BJ (cell line): ENCODE measurements at regions of chr2 and their contacts with region 1.

Region 1: DNA sequence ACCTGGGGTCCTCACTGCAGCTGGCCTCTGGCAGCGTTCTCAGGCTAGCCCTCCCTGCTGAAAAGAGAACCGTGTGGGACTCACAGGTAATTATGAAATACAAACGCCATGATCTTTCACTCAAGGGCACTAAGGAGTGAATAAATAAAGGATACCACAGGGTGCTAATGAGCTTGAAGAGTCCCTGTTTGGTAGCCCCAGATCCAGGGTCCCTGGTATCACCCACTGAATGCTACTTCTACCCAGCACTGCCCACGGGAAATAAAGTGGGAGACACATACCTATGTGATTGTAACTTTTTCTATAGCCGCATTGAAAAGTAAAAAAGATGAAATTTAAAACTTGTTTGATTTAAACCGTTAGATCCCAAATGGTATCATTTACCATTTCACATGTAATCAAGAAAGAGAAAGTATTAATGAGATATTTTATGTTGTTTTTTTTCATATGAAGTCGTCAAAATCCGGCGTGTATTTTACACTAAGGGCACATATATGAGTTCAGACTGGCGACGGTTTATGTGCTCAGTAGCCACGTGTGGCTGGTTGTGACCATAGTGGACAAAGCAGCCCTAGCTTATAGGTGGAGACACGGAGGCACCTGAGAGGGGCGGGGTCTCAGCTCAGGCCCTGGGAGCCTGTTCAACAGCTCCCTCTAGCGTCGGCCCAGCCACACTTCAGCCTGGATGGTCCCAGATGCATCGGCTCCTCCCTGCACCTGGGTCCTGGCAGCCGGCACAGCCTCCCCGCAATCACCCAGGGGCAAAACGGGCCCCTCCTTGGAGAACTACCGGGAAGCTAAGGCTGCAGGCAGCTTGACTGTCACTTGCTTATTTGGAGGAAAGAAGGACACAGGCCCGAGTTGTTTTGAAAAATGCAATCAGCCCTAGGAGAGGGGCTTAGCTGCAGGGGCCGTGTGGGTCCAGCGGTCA is 39.2 kb downstream of the ODC1 start:
- DNase-seq: no peak
- H3K4me3 ChIP-seq: no peak overlapping the region
- H3K27me3 ChIP-seq: no peaks in the 10 kb centered on the region
- CTCF ChIP-seq: peak; percentile 98

Region 2: GRCh38 chr2:10072656-10073480 is 336.0 kb before region 1 on chr2:
- CTCF ChIA-PET with region 1: interaction called, 30 read pairs
- POLR2A ChIA-PET with region 1: no interaction called
- DNase-seq: no peak
- H3K4me3 ChIP-seq: no peak overlapping the region
- H3K27me3 ChIP-seq: 0 out of 2 replicates have a peak, but pooled peaks cover 2% of the 10 kb centered on the region
- CTCF ChIP-seq: peak; percentile 93

Region 3: DNA sequence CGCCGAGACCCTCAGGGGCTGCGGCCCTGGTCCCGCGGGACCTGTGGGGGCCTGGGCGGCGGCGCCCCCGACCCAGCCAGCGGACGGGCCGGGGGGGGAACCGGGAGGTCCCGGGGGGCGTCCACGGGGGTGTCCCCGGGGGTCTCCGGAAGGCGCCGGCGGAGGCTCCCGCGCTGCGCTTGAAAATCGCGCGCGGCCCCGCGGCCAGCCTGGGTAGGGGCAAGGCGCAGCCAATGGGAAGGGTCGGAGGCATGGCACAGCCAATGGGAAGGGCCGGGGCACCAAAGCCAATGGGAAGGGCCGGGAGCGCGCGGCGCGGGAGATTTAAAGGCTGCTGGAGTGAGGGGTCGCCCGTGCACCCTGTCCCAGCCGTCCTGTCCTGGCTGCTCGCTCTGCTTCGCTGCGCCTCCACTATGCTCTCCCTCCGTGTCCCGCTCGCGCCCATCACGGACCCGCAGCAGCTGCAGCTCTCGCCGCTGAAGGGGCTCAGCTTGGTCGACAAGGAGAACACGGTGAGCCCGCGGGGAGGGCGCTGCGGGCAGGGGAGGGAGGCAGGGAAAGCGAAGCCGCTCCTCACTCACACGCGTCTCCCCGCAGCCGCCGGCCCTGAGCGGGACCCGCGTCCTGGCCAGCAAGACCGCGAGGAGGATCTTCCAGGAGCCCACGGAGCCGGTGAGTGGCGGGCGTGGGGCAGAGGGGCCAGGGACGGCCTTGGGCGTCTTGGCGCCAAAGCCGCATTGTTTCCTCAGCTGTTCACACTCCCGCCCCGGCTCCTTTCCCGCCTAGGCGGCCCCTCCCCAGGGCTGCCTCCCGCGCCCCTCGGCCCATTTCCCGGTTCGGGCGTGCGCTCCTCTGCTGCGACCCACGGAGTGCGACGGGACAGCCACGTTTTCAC is 286.3 kb before region 1 on chr2 and contains the start of gene RRM2:
- CTCF ChIA-PET with region 1: interaction called, 136 read pairs
- POLR2A ChIA-PET with region 1: no interaction called
- DNase-seq: no peak
- H3K4me3 ChIP-seq: peak within 1 kb of the TSS; percentile 80
- H3K27me3 ChIP-seq: no peaks in the 10 kb centered on the region
- CTCF ChIP-seq: no peak
- polyA plus RNA-seq, gene RRM2: 23.5 and 31.8 TPM in 2 replicates

Region 4: DNA sequence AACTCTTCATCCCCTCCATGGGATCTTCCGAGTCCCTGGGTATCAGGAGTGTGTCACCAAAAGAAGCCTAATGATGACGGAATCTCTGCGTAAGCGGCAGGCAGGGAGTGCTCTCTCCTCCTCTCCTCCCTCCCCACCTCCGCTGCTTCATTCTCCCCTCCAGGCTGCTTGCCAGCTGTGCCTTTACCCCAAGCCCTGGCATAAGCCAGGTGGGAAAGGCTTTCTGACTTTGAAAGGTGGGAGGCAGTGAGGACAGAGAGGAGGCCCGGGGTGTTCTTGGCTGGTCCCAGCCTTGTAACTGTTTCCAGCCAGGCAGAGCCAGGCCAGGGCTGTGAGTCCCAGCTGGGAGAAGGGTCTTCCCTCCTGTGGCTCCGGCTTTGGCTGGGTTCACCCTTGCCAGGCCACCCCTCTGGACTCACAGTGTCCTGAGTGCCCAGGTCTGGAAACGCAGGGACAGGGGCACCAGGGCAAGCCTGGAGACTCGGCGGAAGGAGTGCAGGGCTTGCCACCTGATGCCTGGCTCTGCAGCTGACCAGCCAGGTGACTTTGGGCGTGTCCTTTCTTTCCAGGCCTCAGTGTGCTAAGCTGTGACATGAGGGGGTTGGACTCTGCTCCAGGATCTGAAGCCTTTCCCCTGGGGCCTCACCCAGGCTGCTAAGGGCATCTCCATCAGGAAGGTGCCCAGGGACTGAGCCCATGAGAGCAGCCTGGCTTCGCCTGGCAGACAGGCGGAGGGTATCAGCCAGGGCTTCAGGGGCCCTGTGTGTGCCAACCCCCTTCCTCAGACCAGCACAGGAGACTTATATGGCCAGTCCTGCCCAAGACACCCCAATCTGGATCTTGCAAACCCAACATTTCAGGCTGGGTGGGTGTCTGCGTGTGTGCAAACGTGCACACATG is 139.0 kb before region 1 on chr2:
- CTCF ChIA-PET with region 1: interaction called, 15 read pairs
- POLR2A ChIA-PET with region 1: no interaction called
- DNase-seq: no peak
- H3K4me3 ChIP-seq: no peak overlapping the region
- H3K27me3 ChIP-seq: peaks cover 4% of the 10 kb centered on the region
- CTCF ChIP-seq: no peak

Region 5: GRCh38 chr2:10307561-10308156 is 101.3 kb before region 1 on chr2:
- CTCF ChIA-PET with region 1: interaction called, 26 read pairs
- POLR2A ChIA-PET with region 1: no interaction called
- DNase-seq: no peak
- H3K4me3 ChIP-seq: no peak overlapping the region
- H3K27me3 ChIP-seq: no peaks in the 10 kb centered on the region
- CTCF ChIP-seq: no peak

Region 6: DNA sequence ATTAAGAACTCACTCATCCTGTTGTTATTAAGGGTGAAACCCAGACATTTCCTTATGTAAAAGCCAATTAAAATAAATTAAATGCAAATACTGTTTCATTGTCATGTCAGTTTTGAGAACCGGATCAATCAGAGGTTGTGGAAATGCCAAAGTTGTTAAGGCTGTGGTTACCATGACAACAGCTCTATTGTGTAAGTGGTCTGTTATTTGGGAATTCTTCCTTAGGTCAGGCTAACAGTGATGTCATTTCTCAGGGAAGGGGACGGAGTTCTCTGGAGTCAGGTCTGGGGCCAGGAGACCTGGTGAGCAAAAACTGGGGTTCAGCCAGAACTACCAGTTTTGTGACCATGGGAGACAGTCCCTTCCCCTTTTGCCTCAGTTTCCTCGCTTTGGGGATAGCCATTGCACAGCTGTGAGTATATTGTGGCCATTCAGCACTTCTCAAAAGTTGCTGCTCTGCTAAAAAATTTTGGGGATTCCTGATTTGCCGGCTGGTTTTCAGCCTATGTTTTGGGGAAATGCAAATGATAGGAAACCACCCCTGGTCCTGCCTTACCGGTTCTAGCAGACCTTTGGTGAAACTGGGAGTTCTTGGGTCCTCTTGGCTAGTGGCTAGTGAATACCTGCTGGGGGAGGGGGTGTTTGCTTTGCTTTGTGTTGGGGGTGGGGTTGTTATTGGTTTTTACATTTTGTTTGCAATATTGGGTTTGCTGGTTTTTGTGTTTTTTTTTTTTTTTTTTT is 84.6 kb before region 1 on chr2:
- CTCF ChIA-PET with region 1: no interaction called
- POLR2A ChIA-PET with region 1: no interaction called
- DNase-seq: no peak
- H3K4me3 ChIP-seq: no peak overlapping the region
- H3K27me3 ChIP-seq: no peaks in the 10 kb centered on the region
- CTCF ChIP-seq: no peak

Region 7: DNA sequence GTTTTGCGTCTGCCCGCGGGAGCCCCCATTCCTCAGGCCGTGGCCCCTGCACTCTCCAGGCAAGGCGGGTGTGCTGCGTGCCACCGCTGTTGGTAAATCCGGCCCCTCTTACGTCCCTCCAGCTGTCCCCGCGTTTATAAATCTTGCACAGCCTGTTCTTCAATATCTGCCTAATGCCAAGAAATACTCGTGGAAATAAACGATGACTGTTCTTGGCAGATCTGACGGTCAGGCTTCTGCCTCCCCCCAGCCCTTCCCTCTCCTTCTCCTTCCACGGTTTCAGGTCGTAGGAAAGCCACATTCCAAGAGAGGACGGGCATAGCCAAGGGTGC is 18.7 kb after region 1 on chr2:
- CTCF ChIA-PET with region 1: interaction called, 18 read pairs
- POLR2A ChIA-PET with region 1: no interaction called
- DNase-seq: no peak
- H3K4me3 ChIP-seq: no peak overlapping the region
- H3K27me3 ChIP-seq: no peaks in the 10 kb centered on the region
- CTCF ChIP-seq: no peak